ENCODE measurements at regions of chr15 and their contacts with region 1.

Region 1: GRCh38 chr15:89177633-89178306 is 43.6 kb downstream of the RLBP1 start:
- DNase-seq: peak in 4 of 5 donors; percentile 53 to 77 (median 64)
- ATAC-seq: peak in 3 of 4 donors; percentile 21 to 59 (median 35)
- H3K4me3 ChIP-seq: no peak overlapping the region
- H3K27ac ChIP-seq: peak overlapping the region in 6 of 12 donors; percentile 17 to 61 (median 42)
- H3K4me1 ChIP-seq: peaks cover 0 to 45% (median 22%) of the 10 kb centered on the region in 12 donors
- H3K27me3 ChIP-seq: no peaks in the 10 kb centered on the region
- CTCF ChIP-seq: peak; percentile 63 to 91 (median 82)
- POLR2A ChIP-seq: no peak

Region 2: GRCh38 chr15:88897456-88898194 is 280.1 kb before region 1 on chr15:
- intact Hi-C with region 1: loop called in 6 of 10 experiments (anchors 5 to 10 kb)
- DNase-seq: peak; percentile 84 to 92 (median 90)
- ATAC-seq: peak; percentile 77 to 95 (median 88)
- H3K4me3 ChIP-seq: peak overlapping the region in 4 of 12 donors; percentile 5 to 28 (median 11)
- H3K27ac ChIP-seq: peak overlapping the region in 11 of 12 donors; percentile 68 to 87 (median 81)
- H3K4me1 ChIP-seq: peaks cover 5 to 72% (median 45%) of the 10 kb centered on the region in 12 donors
- H3K27me3 ChIP-seq: peaks cover 0 to 8% (median 0%) of the 10 kb centered on the region in 9 donors
- CTCF ChIP-seq: peak; percentile 47 to 88 (median 74)
- POLR2A ChIP-seq: no peak

Region 3: DNA sequence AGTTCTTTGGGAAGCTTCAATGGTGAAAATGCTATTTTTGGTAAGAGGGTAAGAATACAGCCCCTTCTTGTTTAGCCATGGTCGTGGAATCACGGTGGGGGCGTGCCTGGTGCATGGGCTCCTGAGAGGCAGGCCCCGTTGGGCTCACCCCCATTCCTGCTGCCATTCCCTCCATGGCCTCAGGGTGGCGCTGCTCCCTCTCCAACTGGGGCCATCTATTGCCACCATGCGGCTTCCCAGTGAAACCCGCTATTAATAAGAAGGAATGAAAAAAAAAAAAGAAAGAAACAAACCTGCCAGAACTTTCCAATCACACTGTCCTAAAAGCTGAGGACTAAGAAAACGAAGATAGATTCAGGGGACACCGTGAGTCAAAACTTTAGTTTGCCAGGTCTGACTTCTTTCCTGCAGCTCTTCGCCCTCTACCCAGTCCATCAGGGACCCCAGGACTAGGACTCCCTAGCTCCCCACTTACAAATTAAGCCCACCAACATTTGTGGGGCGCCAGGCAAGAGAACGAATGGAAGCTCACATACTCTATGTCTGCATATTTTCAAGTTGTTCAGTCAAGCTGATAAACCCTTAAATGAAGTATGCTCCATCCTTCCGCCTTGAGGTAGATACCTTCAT is 120.2 kb before region 1 on chr15:
- intact Hi-C with region 1: loop called (anchors 1 to 2 kb)
- DNase-seq: peak; percentile 73 to 92 (median 80)
- ATAC-seq: peak; percentile 71 to 92 (median 92)
- H3K4me3 ChIP-seq: no peak overlapping the region
- H3K27ac ChIP-seq: no peak overlapping the region
- H3K4me1 ChIP-seq: peaks cover 0 to 9% (median 5%) of the 10 kb centered on the region in 12 donors
- H3K27me3 ChIP-seq: no peaks in the 10 kb centered on the region
- CTCF ChIP-seq: peak; percentile 96 to 100 (median 99)
- POLR2A ChIP-seq: no peak

Region 4: GRCh38 chr15:89087830-89088604 is 89.8 kb before region 1 on chr15 and contains the start of gene ABHD2:
- intact Hi-C with region 1: loop called in 2 of 10 experiments (anchors 5 to 10 kb)
- DNase-seq: peak; percentile 99 to 100 (median 99)
- ATAC-seq: peak; percentile 89 to 96 (median 94)
- H3K4me3 ChIP-seq: peak within 1 kb of the TSS; percentile 75 to 97 (median 94)
- H3K27ac ChIP-seq: peak within 1 kb of the TSS; percentile 91 to 98 (median 96)
- H3K4me1 ChIP-seq: peaks cover 0 to 60% (median 49%) of the 10 kb centered on the region in 12 donors
- H3K27me3 ChIP-seq: no peaks in the 10 kb centered on the region
- CTCF ChIP-seq: no peak
- POLR2A ChIP-seq: peak; percentile 87 to 97
- total RNA-seq, gene ABHD2: 53.4 to 243 (median 128) TPM

Region 5: DNA sequence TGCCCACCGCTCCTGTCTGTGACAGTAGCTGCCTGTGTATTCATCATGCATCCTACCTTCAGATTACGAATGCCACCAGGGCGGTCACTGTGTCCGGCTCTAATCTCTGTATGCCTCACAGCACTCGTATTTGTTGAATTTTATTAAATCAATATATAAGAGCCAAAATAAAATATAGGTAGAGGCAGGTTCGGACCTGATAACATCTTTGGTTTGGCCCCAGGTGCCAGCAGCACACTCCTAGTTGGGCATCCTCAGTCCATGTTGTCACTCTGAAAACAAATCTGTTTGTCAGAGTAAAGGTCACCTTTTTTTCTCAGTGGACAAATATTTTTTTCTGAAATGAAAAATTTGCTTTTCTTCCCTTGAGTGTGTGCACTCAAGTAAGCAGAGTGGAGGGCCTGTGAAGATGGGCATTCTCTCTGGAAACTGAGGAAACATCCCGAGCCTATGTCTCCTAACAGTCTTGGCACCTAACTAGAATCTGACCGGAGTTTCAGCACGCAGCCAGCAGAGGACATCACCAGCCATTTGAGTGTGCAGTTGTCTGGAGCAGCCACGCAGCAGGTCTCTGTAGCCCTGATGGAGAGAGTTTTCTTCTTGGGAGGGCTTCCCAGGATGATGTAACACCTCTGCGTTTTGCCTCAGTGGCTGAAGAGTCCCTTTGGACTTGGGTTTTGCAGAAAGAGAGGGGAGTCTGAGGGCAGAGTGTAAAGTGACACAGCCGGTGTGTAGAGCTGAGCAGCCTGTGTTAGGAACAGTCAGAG is 38.2 kb before region 1 on chr15:
- intact Hi-C with region 1: loop called in 3 of 10 experiments (anchors 5 kb)
- DNase-seq: peak in 4 of 5 donors; percentile 41 to 65 (median 54)
- ATAC-seq: peak in 3 of 4 donors; percentile 10 to 14 (median 11)
- H3K4me3 ChIP-seq: no peak overlapping the region
- H3K27ac ChIP-seq: peak overlapping the region; percentile 31 to 90 (median 78)
- H3K4me1 ChIP-seq: peaks cover 22 to 100% (median 87%) of the 10 kb centered on the region in 12 donors
- H3K27me3 ChIP-seq: no peaks in the 10 kb centered on the region
- CTCF ChIP-seq: peak in 6 of 12 donors; percentile 11 to 42 (median 28)
- POLR2A ChIP-seq: no peak